ENCODE measurements at regions of chr11 and their contacts with region 1.

Region 1: DNA sequence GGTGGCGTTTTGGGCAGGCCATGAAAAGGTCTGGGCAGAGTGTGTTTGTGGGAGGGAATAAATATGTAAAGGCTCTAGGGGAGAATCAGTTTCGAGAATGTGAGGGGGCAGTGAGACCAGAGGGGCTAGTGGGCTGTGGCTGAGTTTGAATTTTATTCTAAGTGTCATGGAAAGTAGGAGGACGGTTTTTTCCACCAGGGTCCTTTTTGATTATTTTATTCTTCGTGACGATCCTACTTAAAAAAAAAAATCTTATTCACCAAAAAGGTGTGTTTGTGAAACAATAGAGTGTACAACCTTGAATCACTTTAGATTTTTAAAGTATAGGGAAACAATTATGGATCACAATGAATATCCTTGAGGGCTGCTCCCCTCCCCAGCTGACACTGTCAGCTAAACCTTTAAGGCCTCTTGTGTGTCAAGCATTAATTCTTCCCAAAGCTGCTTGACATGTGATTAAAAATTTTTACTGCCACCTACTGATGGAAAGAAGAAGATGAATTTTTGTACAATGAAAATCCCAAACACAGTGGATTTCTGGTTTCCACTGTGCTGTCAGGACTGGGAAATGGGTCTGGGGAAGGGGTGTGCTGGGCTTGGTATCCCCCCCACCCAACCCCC is 107.5 kb upstream of the OR4B1 start:
- DNase-seq: no peak
- ATAC-seq: peak; percentile 65
- H3K4me3 ChIP-seq: peak overlapping the region in 1 of 2 experiments; percentile 37; a peak in 2 of 4 replicates
- H3K27ac ChIP-seq: peak overlapping the region; percentile 67
- H3K4me1 ChIP-seq: peaks cover 22% of the 10 kb centered on the region
- H3K27me3 ChIP-seq: no peaks in the 10 kb centered on the region
- CTCF ChIP-seq: no peak

Region 2: DNA sequence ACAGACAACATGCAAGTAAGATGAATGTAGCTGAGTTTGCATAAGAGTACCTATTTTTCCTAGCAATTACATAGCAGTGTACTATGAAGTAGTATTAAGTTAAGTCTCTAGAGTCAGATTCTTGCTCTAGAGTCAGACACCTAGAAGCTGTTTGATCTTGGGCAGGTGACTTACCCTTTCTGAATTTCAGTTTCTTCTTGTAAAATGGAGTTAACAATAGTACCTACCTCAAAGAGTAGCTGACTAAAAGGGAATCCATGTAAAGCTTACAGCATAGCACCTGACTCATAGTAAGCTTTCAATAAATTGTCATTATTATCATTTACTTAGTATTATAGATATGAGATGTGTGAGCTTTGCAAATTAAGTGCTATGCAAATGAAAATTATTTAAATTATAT is 176.6 kb before region 1 on chr11:
- CTCF ChIA-PET with region 1: interaction called, 9 read pairs
- POLR2A ChIA-PET with region 1: interaction called, 4 read pairs
- in situ Hi-C with region 1: no loop called
- intact Hi-C with region 1: loop called (anchors 2 kb)
- DNase-seq: no peak
- ATAC-seq: no peak
- H3K4me3 ChIP-seq: no peak overlapping the region
- H3K27ac ChIP-seq: peak overlapping the region; percentile 68; the same call in 1 of the 2 replicates
- H3K4me1 ChIP-seq: peaks cover 7% of the 10 kb centered on the region; the same call in 1 of the 2 replicates
- H3K27me3 ChIP-seq: no peaks in the 10 kb centered on the region
- CTCF ChIP-seq: no peak

Region 3: GRCh38 chr11:48001438-48002021 is 107.6 kb before region 1 on chr11:
- CTCF ChIA-PET with region 1: interaction called, 6 read pairs
- POLR2A ChIA-PET with region 1: interaction called, 13 read pairs
- in situ Hi-C with region 1: no loop called
- intact Hi-C with region 1: no loop called
- DNase-seq: no peak
- ATAC-seq: peak; percentile 52; the same call in 1 of the 2 replicates
- H3K4me3 ChIP-seq: no peak overlapping the region
- H3K27ac ChIP-seq: peak overlapping the region; percentile 21; the same call in 1 of the 2 replicates
- H3K4me1 ChIP-seq: peaks cover 71% of the 10 kb centered on the region
- H3K27me3 ChIP-seq: no peaks in the 10 kb centered on the region
- CTCF ChIP-seq: no peak

Region 4: GRCh38 chr11:48078689-48079475 is 30.3 kb before region 1 on chr11:
- CTCF ChIA-PET with region 1: no interaction called
- POLR2A ChIA-PET with region 1: interaction called, 11 read pairs
- in situ Hi-C with region 1: no loop called
- intact Hi-C with region 1: no loop called
- DNase-seq: no peak
- ATAC-seq: no peak
- H3K4me3 ChIP-seq: no peak overlapping the region
- H3K27ac ChIP-seq: no peak overlapping the region
- H3K4me1 ChIP-seq: peaks cover 10% of the 10 kb centered on the region
- H3K27me3 ChIP-seq: no peaks in the 10 kb centered on the region
- CTCF ChIP-seq: no peak

Measured in Panc1 (cell line).